Activated naive CD4-positive, alpha-beta T cell treated with anti-CD3 and anti-CD28 coated beads for 36 hours (primary cell): ENCODE measurements at regions of chr11 and their contacts with region 1.

Region 1: DNA sequence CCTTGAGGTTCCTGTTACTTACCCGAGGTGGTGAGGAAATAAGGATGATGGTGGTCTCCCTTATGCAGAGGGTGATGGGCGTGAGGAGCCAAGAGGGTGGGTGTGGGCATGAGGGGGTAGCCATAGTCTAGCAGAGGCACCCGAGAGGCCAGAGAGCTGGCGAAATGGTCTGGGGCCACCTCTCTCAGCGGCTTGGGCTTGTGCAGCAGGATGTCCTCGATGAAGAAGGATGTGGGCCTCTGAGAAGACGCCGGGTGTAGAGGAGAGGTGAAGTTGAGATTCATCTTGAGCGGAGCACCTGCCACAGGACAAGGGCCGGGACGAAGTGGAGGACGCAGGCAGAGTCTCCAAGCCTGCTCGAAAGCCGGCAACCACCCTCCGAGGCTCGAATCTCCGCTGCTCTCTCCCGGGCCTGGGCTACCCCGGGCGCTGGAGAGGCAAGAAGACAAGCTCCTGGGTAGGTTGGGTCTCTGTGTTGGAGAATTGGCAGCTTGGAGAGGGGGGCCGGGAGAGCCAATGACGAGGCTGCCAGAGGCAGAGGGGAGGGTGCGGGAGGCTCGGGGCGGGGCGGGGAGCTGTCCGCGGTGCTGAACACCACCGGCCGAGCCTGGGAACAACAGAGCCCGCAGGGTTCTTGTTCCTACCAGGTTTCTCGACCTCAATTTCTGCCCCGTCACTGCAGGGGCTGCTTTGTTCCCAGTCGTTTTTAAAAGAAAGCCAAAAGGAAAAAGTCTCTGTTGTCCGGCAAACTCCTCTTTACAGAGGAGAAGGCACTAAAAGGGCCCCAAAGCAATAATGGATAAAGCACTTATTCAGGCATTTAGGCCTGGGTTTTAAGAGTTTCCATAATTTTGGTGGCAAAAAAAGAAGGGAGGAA is at the start of gene BSX:
- DNase-seq: peak; percentile 70
- H3K4me3 Mint-ChIP-seq: no peak within 1 kb of the TSS
- H3K27ac Mint-ChIP-seq: no peak within 1 kb of the TSS
- H3K4me1 Mint-ChIP-seq: peaks cover 35% of the 10 kb centered on the region
- H3K27me3 Mint-ChIP-seq: peaks cover 85% of the 10 kb centered on the region
- total RNA-seq, gene BSX: not detected

Region 2: GRCh38 chr11:122882857-122883645 is 98.6 kb before region 1 on chr11:
- CTCF ChIA-PET with region 1: interaction called, 3 read pairs
- intact Hi-C with region 1: loop called (anchors 2 kb)
- DNase-seq: peak; percentile 63
- H3K4me3 Mint-ChIP-seq: peak overlapping the region; percentile 78
- H3K27ac Mint-ChIP-seq: no peak overlapping the region
- H3K4me1 Mint-ChIP-seq: peaks cover 19% of the 10 kb centered on the region
- H3K27me3 Mint-ChIP-seq: peaks cover 1% of the 10 kb centered on the region